ENCODE measurements at regions of chr7 and their contacts with region 1.

Region 1: DNA sequence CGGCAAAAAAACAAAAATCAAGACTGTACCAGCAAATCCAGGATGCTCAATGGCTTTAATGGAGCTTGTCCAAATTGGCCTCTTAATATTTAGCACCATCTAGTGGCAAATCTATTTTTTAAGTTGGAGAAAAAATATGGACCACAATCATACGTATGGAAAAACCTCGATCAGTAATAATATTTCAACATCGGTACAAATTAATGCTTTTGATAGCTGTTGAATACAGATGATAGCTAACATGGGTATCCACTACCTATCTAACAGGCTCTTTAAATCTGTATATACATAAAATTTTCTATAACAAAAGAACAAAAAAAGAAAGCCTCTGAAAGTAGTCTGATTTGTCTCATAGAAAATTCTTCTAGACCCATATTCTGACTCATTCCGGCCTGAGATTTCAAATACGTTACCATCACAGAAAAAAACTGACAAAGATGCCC is 29.2 kb downstream of the COA1 start:
- DNase-seq: peak in 4 of 5 donors; percentile 62 to 70 (median 68)
- H3K4me3 ChIP-seq: no peak overlapping the region
- H3K4me3 Mint-ChIP-seq: peak overlapping the region in 6 of 8 donors; percentile 4 to 53 (median 32)
- H3K27ac ChIP-seq: no peak overlapping the region
- H3K27ac Mint-ChIP-seq: peak overlapping the region in 6 of 7 donors; percentile 48 to 85 (median 70)
- H3K4me1 ChIP-seq: peaks cover 23% of the 10 kb centered on the region
- H3K4me1 Mint-ChIP-seq: peaks cover 15 to 31% (median 19%) of the 10 kb centered on the region in 4 donors
- H3K27me3 ChIP-seq: no peaks in the 10 kb centered on the region
- H3K27me3 Mint-ChIP-seq: no peaks in the 10 kb centered on the region

Region 2: DNA sequence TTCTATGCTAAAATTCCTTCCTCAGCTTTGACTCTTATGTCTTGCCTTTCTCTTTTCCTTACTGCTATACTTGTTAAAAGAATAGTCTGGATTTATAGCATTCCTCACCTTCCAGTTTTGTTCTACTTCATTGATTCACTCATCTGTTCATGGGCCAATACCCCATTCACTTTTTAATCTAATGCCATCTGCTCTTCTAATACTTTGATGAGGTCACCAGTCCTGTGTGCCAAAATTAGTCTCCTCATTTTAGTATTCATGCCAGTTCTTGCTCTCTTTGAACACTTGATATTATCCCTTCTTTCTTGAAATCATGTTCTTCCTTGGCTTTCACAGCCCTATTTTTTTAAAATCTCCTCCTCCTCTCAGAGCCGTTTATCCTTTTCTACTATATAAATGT is 97.8 kb before region 1 on chr7:
- CTCF ChIA-PET with region 1: interaction called, 14 read pairs
- POLR2A ChIA-PET with region 1: interaction called, 4 read pairs
- intact Hi-C with region 1: no loop called
- DNase-seq: no peak
- H3K4me3 ChIP-seq: no peak overlapping the region
- H3K4me3 Mint-ChIP-seq: no peak overlapping the region
- H3K27ac ChIP-seq: no peak overlapping the region
- H3K27ac Mint-ChIP-seq: no peak overlapping the region
- H3K4me1 ChIP-seq: peaks cover 80% of the 10 kb centered on the region
- H3K4me1 Mint-ChIP-seq: peaks cover 21 to 50% (median 34%) of the 10 kb centered on the region in 4 donors
- H3K27me3 ChIP-seq: no peaks in the 10 kb centered on the region
- H3K27me3 Mint-ChIP-seq: no peaks in the 10 kb centered on the region

Region 3: DNA sequence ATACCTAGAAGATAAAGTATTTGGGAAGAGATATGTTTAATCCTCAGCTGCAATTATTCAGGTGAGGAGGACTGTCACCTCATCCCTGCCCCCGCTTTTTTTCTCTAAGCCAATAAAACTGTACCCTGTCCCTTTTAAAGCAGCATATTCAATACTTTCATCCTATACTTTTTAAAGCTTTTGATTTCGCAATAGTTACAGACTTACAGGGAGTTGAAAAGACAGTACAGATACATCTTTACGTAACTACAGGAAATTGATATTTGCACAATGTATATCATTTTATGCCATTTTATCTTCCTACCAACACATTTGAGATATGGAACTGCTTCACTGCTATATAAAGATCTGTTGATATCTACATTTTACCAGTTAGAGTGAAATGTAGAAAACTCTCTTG is 69.6 kb before region 1 on chr7:
- CTCF ChIA-PET with region 1: interaction called, 10 read pairs
- POLR2A ChIA-PET with region 1: interaction called, 4 read pairs
- intact Hi-C with region 1: no loop called
- DNase-seq: no peak
- H3K4me3 ChIP-seq: no peak overlapping the region
- H3K4me3 Mint-ChIP-seq: peak overlapping the region in 4 of 8 donors; percentile 4 to 54 (median 20)
- H3K27ac ChIP-seq: no peak overlapping the region
- H3K27ac Mint-ChIP-seq: peak overlapping the region; percentile 64 to 95 (median 82)
- H3K4me1 ChIP-seq: peaks cover 93% of the 10 kb centered on the region
- H3K4me1 Mint-ChIP-seq: peaks cover 46 to 94% (median 67%) of the 10 kb centered on the region in 4 donors
- H3K27me3 ChIP-seq: no peaks in the 10 kb centered on the region
- H3K27me3 Mint-ChIP-seq: no peaks in the 10 kb centered on the region

Region 4: GRCh38 chr7:43669286-43670081 is 30.6 kb before region 1 on chr7:
- CTCF ChIA-PET with region 1: interaction called, 12 read pairs
- POLR2A ChIA-PET with region 1: interaction called, 7 read pairs
- intact Hi-C with region 1: no loop called
- DNase-seq: peak; percentile 77 to 93 (median 79)
- H3K4me3 ChIP-seq: peak overlapping the region in 1 of 2 donors; percentile 34
- H3K4me3 Mint-ChIP-seq: peak overlapping the region; percentile 82 to 92 (median 85)
- H3K27ac ChIP-seq: peak overlapping the region; percentile 66
- H3K27ac Mint-ChIP-seq: peak overlapping the region; percentile 85 to 98 (median 96)
- H3K4me1 ChIP-seq: peaks cover 60% of the 10 kb centered on the region
- H3K4me1 Mint-ChIP-seq: peaks cover 43 to 86% (median 68%) of the 10 kb centered on the region in 4 donors
- H3K27me3 ChIP-seq: no peaks in the 10 kb centered on the region
- H3K27me3 Mint-ChIP-seq: no peaks in the 10 kb centered on the region

Region 5: DNA sequence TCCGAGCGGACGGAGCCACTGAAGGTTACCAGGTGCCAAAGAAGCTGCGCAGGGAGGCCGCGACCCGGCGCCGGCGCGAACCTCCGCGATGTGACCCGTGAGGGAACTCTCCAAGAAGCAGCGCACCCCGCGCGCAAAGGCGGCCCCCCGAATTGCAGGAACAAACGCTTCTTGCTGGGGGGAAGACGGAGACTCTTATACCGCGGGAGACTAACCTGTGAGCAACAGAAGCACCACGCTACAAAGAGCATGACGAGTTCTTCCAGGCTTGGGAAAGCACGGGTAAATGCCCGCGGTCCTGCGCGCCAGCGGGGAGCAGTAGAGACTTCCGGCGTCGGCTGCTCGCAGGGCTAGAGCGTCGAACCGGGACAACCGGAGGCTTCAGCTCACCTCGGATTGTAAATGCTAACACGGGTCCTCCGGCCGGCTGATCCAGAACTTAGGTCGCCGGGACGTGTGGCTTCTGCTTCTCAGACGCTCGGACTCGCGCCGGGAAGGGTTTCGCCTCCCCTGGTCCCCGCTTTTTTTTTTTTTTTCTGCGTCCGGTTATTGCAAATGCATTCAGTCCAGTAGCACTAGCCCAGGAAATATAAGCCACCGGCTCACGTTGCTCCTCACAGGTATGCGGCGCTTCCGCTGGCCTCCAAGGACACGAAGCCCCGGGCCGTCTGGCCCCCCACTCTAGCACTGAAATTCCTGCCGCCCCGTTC is 29.3 kb after region 1 on chr7 and contains the start of gene COA1:
- CTCF ChIA-PET with region 1: interaction called, 11 read pairs
- POLR2A ChIA-PET with region 1: interaction called, 3 read pairs
- intact Hi-C with region 1: no loop called
- DNase-seq: peak; percentile 82 to 84 (median 83)
- H3K4me3 ChIP-seq: peak within 1 kb of the TSS; percentile 97 to 99
- H3K4me3 Mint-ChIP-seq: peak within 1 kb of the TSS; percentile 93 to 95 (median 94)
- H3K27ac ChIP-seq: peak within 1 kb of the TSS; percentile 67
- H3K27ac Mint-ChIP-seq: peak within 1 kb of the TSS; percentile 84 to 95 (median 91)
- H3K4me1 ChIP-seq: peaks cover 34% of the 10 kb centered on the region
- H3K4me1 Mint-ChIP-seq: peaks cover 27 to 43% (median 35%) of the 10 kb centered on the region in 4 donors
- H3K27me3 ChIP-seq: no peaks in the 10 kb centered on the region
- H3K27me3 Mint-ChIP-seq: no peaks in the 10 kb centered on the region
- total RNA-seq, gene COA1: 52.0 to 53.2 TPM

Region 6: DNA sequence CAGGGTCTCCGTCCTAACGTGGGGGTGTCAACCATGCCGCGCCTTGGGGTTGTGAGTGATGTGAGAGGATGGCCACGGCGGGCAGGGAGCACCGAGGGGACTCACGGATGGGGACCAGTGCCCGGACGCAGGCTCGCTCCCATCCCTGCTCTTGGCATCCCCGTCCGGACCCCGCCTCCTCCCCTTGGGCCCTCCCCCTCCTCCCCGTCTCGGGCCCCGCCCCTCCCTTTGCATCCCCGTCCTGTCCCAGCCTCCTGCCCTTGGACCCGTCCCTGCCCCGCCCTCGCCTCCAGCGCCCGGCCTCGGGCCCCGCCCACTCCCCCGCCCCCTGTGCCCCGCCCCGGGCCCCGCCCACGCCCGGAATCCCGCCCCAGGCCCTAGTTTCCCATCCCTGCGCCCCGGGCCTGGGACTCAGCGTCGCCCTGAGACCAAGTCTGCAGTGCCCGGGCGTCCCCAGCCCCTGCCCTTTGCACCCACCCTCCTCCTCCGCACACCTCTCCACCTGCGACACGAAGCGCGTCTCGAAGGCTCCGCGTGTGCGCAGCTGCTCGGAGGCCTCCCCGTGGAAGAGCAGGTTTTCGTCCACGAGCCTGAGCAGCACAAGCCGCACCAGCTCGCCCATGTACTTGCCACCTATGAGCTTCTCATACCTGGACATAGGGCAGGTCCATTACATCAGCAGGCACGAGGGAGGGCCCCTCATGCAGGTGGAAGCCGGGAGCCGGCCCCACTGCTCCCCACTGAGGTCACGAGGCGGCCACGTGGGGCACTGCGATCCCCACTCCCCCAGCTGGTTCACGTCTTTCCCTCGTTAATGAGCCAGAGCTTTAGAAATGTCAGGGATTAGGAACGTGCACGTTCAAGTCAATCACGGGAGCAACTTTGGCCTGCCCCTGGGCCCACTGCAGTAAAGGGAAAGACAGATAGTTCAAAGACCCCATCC is 446.2 kb after region 1 on chr7:
- CTCF ChIA-PET with region 1: no interaction called
- POLR2A ChIA-PET with region 1: no interaction called
- intact Hi-C with region 1: no loop called
- DNase-seq: peak; percentile 43 to 63 (median 48)
- H3K4me3 ChIP-seq: peak overlapping the region in 1 of 2 donors; percentile 51
- H3K4me3 Mint-ChIP-seq: peak overlapping the region; percentile 59 to 84 (median 77)
- H3K27ac ChIP-seq: peak overlapping the region; percentile 15
- H3K27ac Mint-ChIP-seq: peak overlapping the region in 3 of 7 donors; percentile 48 to 90 (median 78)
- H3K4me1 ChIP-seq: peaks cover 8% of the 10 kb centered on the region
- H3K4me1 Mint-ChIP-seq: peaks cover 1 to 14% (median 5%) of the 10 kb centered on the region in 4 donors
- H3K27me3 ChIP-seq: no peaks in the 10 kb centered on the region
- H3K27me3 Mint-ChIP-seq: peaks cover 2% of the 10 kb centered on the region in 2 donors